Right lobe of liver (tissue), 6 donors: ENCODE measurements at regions of chr22 and their contacts with region 1.

Region 1: DNA sequence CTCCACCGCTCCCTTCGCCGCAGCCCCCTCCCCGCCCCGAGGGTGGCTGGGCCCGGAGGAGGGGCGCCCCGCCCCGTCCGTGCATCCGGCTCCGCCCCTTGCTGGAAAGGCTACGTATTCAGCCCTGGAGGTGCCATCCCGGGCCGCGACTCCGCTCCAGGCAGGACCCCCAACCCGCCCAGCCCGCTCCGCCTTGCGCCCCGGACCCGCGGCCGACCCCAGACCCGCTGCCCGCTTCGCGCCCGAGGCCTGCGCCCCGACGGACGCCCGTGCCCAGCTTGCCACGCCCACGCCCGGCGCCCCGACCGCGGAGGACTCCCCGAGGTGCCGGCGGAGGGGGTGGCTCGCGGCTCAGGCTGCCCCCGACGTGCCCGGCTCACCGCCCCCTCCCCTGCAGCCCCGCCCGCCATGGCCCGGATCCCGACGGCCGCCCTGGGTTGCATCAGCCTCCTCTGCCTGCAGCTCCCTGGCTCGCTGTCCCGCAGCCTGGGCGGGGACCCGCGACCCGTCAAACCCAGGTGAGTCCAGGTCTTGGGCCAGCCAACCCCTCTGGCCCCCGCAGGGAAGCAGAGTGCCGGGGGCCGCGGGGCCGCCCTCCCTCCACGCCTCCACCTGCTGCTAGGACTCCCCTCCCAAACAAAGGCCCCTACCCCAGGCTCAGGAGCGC is at the start of gene ADM2:
- DNase-seq: peak in 1 of 3 donors; percentile 65
- ATAC-seq: peak; percentile 53 to 74 (median 58)
- H3K4me3 ChIP-seq: peak within 1 kb of the TSS; percentile 45 to 53 (median 52)
- H3K27ac ChIP-seq: no peak within 1 kb of the TSS
- H3K4me1 ChIP-seq: peaks cover 0 to 11% (median 1%) of the 10 kb centered on the region in 4 donors
- H3K27me3 ChIP-seq: no peaks in the 10 kb centered on the region
- CTCF ChIP-seq: no peak
- POLR2A ChIP-seq: peak; percentile 22
- total RNA-seq, gene ADM2: 1.0 to 19.2 (median 2.2) TPM

Region 2: GRCh38 chr22:50244420-50245213 is 237.0 kb before region 1 on chr22 and contains the start of gene TUBGCP6:
- intact Hi-C with region 1: loop called in 1 of 2 experiments (anchors 10 kb)
- DNase-seq: peak; percentile 96 to 97 (median 96)
- ATAC-seq: peak; percentile 82 to 90 (median 86)
- H3K4me3 ChIP-seq: peak within 1 kb of the TSS; percentile 71 to 97 (median 79)
- H3K27ac ChIP-seq: peak within 1 kb of the TSS; percentile 52 to 83 (median 66)
- H3K4me1 ChIP-seq: peaks cover 0 to 42% (median 19%) of the 10 kb centered on the region in 4 donors
- H3K27me3 ChIP-seq: no peaks in the 10 kb centered on the region
- CTCF ChIP-seq: peak in 2 of 4 donors; percentile 14 to 31
- POLR2A ChIP-seq: peak; percentile 65
- total RNA-seq, gene TUBGCP6: 10.4 to 22.6 (median 14.6) TPM